MCF 10A (cell line): ENCODE measurements at regions of chr3 and their contacts with region 1.

Region 1: DNA sequence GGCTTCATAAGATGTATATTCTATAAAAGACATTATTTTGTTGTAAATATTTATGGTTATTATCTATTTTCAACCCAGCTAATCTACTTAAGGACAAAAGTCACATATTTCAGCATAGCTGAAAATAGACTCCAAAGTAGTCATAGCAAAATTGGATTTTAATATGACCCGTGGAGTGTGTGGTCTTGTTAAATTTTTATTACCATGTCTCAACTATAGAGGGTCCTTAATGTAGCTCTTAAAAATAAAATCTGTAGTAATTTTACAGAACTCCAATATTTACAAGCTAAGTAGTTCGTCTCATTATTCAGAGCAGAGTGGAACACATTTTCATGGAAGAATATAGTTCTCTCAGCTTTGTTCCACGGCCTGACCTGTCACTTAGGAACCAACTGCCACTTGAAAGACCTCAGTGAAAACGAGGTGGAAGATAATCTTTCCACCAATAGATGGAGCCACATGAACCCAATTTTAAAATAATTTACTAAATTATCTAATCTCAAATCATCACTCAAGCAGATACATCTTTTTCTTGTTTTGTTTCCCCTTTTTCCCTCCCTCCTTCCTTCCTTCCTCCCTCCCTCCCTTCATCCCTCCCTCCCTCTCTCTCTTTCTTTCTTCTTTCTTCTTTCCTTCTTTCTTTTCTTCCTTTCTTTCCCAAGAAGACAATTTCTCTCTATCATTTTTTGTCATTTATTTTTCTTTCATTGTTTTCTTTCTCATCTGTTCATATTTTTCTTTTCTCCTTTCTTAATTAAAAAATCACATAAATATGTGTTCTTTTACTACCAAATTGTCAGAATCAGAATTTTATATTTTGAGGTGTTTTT is 97.2 kb downstream of the CLDN1 start:
- DNase-seq: peak; percentile 57
- H3K4me3 Mint-ChIP-seq: no peak overlapping the region
- H3K27ac Mint-ChIP-seq: no peak overlapping the region
- H3K4me1 Mint-ChIP-seq: peaks cover 16% of the 10 kb centered on the region
- H3K27me3 Mint-ChIP-seq: no peaks in the 10 kb centered on the region
- CTCF ChIP-seq: peak; percentile 50

Region 2: DNA sequence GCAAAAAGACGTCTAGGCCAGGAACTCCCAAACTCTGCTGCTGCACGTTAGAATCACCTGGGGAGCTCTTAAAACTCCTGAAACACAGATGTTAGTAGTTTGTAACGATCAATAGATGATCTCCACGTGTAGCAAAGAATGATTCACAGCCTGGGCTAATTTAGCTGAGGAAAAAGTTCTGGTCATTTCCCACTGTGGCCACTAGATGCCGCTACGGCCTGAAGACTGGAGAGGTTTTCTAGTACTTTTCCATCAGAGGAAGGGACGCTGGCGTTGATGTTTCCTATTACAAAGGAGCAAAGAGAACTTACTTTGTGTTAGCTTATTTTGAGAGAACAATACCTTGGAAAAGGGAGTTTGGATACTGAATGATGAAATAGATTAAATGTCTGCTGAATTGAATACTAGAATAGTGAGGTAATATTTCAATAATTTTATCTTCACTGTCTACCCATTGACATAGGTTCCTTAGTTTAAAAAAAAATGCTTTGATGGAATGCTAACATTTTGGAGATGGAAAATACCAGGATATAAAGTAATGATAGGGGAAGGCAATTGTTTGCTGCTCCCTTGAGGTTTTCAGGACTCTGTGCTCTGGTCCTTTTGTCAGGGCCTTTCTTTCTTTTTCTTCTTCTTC is 263.4 kb before region 1 on chr3:
- CTCF ChIA-PET with region 1: interaction called, 26 read pairs
- POLR2A ChIA-PET with region 1: interaction called, 3 read pairs
- intact Hi-C with region 1: no loop called
- DNase-seq: peak; percentile 88
- H3K4me3 Mint-ChIP-seq: no peak overlapping the region
- H3K27ac Mint-ChIP-seq: no peak overlapping the region
- H3K4me1 Mint-ChIP-seq: peaks cover 7% of the 10 kb centered on the region
- H3K27me3 Mint-ChIP-seq: no peaks in the 10 kb centered on the region
- CTCF ChIP-seq: peak; percentile 91

Region 3: GRCh38 chr3:190301591-190301990 is 76.5 kb after region 1 on chr3:
- CTCF ChIA-PET with region 1: interaction called, 10 read pairs
- POLR2A ChIA-PET with region 1: interaction called, 24 read pairs
- intact Hi-C with region 1: loop called (anchors 2 kb)
- DNase-seq: no peak
- H3K4me3 Mint-ChIP-seq: no peak overlapping the region
- H3K27ac Mint-ChIP-seq: peak overlapping the region; percentile 47
- H3K4me1 Mint-ChIP-seq: peaks cover 20% of the 10 kb centered on the region
- H3K27me3 Mint-ChIP-seq: no peaks in the 10 kb centered on the region
- CTCF ChIP-seq: no peak

Region 4: GRCh38 chr3:190339130-190339529 is 114.1 kb after region 1 on chr3:
- CTCF ChIA-PET with region 1: interaction called, 34 read pairs
- POLR2A ChIA-PET with region 1: interaction called, 11 read pairs
- intact Hi-C with region 1: no loop called
- DNase-seq: peak; percentile 51
- H3K4me3 Mint-ChIP-seq: no peak overlapping the region
- H3K27ac Mint-ChIP-seq: peak overlapping the region; percentile 55
- H3K4me1 Mint-ChIP-seq: peaks cover 37% of the 10 kb centered on the region
- H3K27me3 Mint-ChIP-seq: no peaks in the 10 kb centered on the region
- CTCF ChIP-seq: peak; percentile 17

Region 5: DNA sequence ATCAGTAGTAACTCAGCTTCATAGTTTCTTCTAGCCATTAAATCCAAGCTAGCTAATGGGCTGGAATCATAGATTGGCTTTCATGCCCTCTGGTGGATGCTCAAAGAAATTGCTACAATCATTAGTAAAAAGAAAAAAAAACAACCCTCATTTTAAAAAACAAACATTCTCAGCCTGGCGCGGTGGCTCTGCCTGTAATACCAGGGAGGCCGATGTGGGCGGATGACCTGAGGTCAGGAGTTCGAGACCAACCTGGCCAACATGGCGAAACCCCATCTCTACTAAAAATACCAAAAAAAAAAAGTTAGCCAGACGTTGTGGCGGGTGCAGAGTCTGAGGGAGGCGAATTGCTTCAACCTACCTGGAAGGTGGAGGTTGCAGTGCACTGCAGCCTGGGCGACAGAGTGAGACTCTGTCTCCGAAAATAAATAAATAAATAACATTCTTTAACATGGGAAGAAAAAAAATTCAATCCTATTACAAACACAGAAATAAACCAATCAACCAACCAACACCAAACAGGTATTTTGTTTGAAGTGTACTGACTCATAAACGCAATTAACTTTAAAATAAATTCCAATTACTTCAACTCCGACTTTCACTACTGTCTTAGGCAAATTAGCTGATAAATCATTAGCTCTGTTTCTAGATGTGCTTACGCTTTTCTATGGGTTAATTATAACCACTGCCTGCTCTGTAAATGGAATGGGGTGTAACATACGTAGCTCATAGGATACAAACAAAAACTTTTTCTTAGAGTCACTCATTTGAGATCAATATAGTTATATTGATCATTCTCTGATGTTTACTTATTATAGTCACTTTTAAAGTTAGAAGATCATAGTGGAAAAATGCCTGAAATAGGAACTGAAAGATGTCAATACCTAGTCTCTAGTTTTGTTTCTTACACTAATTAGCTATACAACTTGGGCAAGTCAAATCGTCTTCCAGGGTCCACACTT is 199.7 kb after region 1 on chr3:
- CTCF ChIA-PET with region 1: interaction called, 25 read pairs
- POLR2A ChIA-PET with region 1: interaction called, 5 read pairs
- intact Hi-C with region 1: loop called (anchors 1 kb)
- DNase-seq: peak; percentile 83
- H3K4me3 Mint-ChIP-seq: no peak overlapping the region
- H3K27ac Mint-ChIP-seq: peak overlapping the region; percentile 71
- H3K4me1 Mint-ChIP-seq: no peaks in the 10 kb centered on the region
- H3K27me3 Mint-ChIP-seq: no peaks in the 10 kb centered on the region
- CTCF ChIP-seq: peak; percentile 64

Region 6: GRCh38 chr3:190443257-190443656 is 218.2 kb after region 1 on chr3:
- CTCF ChIA-PET with region 1: interaction called, 5 read pairs
- POLR2A ChIA-PET with region 1: no interaction called
- intact Hi-C with region 1: loop called (anchors 2 kb)
- DNase-seq: peak; percentile 30
- H3K4me3 Mint-ChIP-seq: no peak overlapping the region
- H3K27ac Mint-ChIP-seq: no peak overlapping the region
- H3K4me1 Mint-ChIP-seq: no peaks in the 10 kb centered on the region
- H3K27me3 Mint-ChIP-seq: no peaks in the 10 kb centered on the region
- CTCF ChIP-seq: peak; percentile 36